Prostate gland (tissue), 2 donors: ENCODE measurements at regions of chr17 and their contacts with region 1.

Region 1: GRCh38 chr17:80959330-80960036 is 32.2 kb upstream of the CHMP6 start:
- DNase-seq: peak; percentile 53
- H3K4me3 ChIP-seq: no peak overlapping the region
- H3K27ac ChIP-seq: peak overlapping the region; percentile 72 to 76
- H3K4me1 ChIP-seq: peaks cover 12% of the 10 kb centered on the region
- H3K27me3 ChIP-seq: no peaks in the 10 kb centered on the region
- CTCF ChIP-seq: peak in 2 of 4 experiments; percentile 16 to 42
- POLR2A ChIP-seq: no peak

Region 2: DNA sequence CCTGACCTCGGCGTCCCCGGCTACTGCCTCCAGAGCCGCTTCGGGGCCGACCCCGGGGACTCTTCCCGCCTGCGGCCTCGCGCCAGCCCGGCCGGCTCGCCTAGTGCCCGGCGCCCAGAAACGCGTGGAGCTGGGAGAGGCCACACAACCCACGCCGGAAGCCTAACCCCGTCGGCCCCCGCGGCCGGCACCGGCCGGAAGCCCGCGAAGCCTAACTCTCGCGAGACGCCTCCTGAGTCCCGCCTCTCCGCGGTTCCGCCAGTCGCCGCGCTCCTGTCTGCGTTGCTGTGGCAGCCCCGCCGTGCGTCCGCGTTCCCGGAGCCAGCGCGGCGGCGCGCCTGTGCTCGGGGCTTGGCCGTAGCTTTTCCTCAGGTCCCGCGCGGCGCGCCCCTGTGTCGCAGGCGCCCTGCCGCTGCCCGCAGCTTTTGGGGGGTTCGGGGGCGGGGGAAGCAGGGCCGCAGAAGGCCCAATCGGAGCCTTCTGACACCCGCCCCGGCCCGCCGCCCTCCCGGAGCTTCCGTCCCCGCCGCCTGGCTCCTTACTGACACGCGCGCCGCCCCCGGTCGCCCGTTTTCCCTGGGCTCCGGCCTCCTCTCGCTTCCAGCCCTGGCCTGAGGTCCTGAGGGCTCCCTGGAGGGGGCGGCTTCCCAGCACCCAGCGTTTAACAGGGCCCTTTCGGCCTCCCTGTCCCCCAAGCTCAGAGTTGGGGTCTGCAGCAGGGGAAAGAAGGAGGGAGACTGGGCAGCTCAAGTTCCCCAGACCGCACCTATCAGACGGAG is 504.7 kb before region 1 on chr17:
- intact Hi-C with region 1: loop called (anchors 10 kb)
- DNase-seq: peak; percentile 96
- H3K4me3 ChIP-seq: peak overlapping the region; percentile 63 to 85
- H3K27ac ChIP-seq: peak overlapping the region; percentile 96 to 97
- H3K4me1 ChIP-seq: no peaks in the 10 kb centered on the region
- H3K27me3 ChIP-seq: no peaks in the 10 kb centered on the region
- CTCF ChIP-seq: peak in 2 of 4 experiments; percentile 20 to 22
- POLR2A ChIP-seq: peak; percentile 74

Region 3: DNA sequence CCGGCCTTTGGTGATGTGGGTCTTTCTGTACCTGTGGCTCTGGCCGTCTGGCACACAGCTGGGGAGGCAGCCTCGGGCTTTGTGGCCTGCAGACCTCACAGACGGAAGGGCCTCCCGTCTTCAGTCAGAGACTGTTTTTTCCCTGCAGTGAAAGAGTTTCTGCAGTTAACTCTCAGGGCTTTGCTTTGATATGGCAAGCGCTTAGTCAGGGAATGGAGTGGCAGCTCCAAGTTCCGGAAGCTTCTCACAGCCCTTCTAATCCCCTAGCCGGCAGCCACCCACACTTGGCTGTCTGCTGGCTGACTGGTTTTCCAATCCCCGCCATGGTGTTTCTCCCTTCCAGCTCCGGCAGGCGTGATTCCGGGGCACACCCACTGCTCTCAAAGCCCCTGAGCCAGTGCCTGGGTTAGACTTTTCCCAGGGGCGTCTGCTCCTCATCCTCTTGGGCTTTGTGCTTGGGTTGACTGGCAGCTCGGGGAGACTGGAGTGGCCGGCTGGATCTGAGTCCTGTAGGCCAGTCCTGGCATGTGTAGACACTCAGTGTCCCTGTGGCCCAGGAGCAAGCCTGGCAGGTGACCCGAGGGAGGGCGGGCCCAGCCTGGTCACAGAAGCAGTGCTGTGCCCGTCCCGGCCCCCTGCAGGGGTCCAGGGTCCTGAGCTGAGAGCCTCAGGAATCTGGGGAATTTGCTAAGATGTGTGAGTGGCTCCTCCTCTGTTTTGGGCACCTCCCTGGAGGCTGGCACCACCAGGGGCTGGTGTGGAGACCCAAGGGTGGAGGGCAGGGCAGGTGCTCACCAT is 105.4 kb after region 1 on chr17:
- intact Hi-C with region 1: no loop called
- DNase-seq: no peak
- H3K4me3 ChIP-seq: no peak overlapping the region
- H3K27ac ChIP-seq: peak overlapping the region; percentile 96 to 98
- H3K4me1 ChIP-seq: peaks cover 57% of the 10 kb centered on the region
- H3K27me3 ChIP-seq: no peaks in the 10 kb centered on the region
- CTCF ChIP-seq: no peak
- POLR2A ChIP-seq: no peak